A673 (cell line): ENCODE measurements at regions of chr10 and their contacts with region 1.

Region 1: DNA sequence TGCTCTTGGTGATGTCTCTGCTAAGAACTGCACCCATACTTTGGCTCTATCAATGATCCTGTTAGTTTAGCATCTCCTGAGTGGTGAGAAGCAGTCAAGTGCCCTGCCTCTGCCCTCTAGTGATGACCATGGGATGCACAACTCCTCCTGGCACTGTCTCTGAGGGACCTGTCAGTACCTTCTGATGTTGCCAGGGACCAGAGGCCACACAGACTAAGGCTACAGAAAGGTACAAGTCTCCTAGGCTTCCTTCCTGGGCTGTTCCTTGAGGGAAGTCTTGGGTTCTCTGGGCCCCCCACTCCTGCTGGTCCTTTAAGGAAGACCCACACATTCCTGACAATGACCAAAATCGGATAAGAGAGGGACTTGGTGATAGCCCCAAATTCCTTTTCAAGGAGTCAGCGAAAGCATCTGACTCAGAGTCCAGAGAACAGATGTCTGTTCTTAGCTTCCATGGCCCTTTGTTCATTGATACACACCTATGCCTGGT is 15.3 kb downstream of the NKX2-3 start:
- DNase-seq: no peak
- H3K4me3 ChIP-seq: no peak overlapping the region
- H3K27ac ChIP-seq: no peak overlapping the region
- H3K4me1 ChIP-seq: peaks cover 6% of the 10 kb centered on the region
- H3K27me3 ChIP-seq: peaks cover 46% of the 10 kb centered on the region
- CTCF ChIP-seq: peak; percentile 48

Region 2: DNA sequence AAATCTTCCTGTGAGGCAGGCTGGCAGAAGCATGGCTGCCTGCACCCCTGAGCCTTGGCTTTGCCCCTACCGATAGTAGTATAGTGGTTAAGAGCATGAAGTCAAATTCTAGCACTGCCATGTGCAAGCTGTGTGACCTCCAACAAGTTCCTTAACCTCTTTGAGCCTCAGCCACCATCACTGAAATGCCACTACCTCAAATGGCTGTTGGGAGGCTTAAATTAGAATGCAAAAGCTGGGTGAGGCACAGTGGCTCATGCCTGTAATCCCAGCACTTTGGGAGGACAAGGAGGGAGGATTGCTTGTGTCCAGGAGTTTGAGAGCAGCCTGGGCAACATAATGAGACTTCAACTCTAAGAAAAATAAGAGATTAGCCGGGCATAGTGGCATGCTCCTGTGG is 1784.7 kb before region 1 on chr10:
- CTCF ChIA-PET with region 1: interaction called, 16 read pairs
- POLR2A ChIA-PET with region 1: no interaction called
- intact Hi-C with region 1: no loop called
- DNase-seq: no peak
- H3K4me3 ChIP-seq: no peak overlapping the region
- H3K27ac ChIP-seq: no peak overlapping the region
- H3K4me1 ChIP-seq: no peaks in the 10 kb centered on the region
- H3K27me3 ChIP-seq: no peaks in the 10 kb centered on the region
- CTCF ChIP-seq: no peak